ENCODE measurements at regions of chr7 and their contacts with region 1.

Region 1: DNA sequence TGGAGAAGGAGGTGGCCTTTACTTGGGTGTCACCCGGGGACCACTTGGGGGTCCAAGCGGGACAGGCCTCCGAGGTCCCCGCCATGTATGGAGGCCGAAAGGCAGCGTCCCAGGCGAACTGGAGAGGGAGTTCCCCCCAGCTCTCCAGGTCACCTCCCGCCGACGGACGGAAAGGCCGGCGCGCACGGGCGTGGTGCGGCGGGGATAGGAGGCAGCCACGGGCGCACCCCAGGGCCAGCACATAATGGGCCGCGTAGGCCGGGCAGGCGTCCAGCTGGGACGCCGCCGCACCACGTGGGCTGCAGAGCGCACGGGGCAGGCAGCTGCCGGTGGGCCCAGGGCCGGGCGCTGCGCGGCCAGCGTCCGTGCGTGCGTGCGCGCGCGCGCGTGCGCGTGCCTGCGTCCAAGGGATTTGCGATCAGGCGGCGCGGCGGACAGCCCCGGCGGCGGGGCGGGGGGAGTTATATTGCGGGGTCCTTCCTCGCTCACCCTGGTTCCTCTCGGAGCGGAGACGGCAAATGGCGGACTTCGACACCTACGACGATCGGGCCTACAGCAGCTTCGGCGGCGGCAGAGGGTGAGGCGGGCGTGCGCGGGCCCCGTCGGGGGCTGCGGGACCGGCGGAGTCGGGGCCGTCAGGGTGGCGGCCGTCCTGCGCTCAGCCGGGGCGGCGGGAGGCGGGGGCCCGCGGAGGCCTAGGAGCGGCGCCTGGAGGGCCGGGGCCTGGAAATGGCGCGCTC is at the start of gene EIF4H:
- DNase-seq: peak; percentile 96 to 99 (median 98)
- H3K4me3 ChIP-seq: peak within 1 kb of the TSS; percentile 67
- H3K27ac ChIP-seq: peak within 1 kb of the TSS; percentile 89 to 95
- H3K4me1 ChIP-seq: peaks cover 7% of the 10 kb centered on the region
- H3K27me3 ChIP-seq: no peaks in the 10 kb centered on the region
- CTCF ChIP-seq: peak in 2 of 3 donors; percentile 0 to 20
- EP300 ChIP-seq: no peak
- POLR2A ChIP-seq: peak; percentile 91
- total RNA-seq, gene EIF4H: 151 to 301 (median 273) TPM

Region 2: DNA sequence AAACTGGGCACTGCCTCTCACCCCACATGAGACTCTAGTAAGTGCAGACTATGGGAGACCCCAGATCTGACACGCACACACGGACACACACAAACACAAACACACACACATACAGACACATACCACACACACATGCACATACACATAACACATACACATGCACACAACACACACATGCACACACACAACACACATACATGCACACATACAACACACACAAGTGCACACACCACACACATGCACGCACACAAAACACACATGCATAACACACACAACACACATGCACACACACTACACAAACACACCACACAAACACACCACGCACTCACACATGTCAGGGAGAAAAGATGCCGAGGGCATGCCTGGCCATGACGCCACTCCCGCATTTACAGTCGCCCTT is 1551.5 kb before region 1 on chr7:
- intact Hi-C with region 1: no loop called
- DNase-seq: no peak
- H3K4me3 ChIP-seq: no peak overlapping the region
- H3K27ac ChIP-seq: no peak overlapping the region
- H3K4me1 ChIP-seq: peaks cover 2% of the 10 kb centered on the region
- H3K27me3 ChIP-seq: no peaks in the 10 kb centered on the region
- CTCF ChIP-seq: no peak
- EP300 ChIP-seq: no peak
- POLR2A ChIP-seq: no peak

Region 3: DNA sequence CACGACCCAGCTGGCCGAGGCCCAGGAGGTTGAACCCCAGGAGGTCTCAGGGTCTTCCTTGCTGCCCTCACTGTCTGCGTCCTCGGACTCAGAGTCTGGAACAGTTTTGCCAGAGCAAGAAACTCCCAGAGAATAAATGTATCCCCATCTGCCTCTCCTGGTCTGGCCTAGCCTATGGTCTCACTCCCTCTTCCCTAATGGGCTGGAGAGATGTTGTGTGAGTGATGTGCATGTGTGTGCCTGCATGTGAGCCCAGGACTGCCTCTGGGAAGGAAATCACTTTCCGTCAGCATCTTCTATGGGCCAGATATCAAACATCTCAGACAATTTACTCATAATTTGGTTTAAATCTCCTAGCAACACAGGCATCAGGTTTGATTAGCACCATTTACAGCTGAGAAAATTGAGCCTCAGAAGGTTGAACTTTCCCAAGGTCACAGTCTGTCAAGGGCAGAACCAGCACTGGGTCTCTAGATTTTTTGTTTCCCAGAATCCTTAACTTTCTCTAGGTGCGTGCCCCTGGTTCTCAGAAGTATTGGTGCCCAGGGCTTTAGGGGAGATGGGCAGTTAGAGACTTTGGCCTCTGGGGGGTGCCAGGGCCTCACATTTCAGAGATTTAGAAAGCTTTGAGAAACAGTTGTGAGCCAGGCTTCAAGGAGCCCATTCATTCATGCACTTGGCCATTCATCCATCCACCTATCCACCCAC is 308.1 kb before region 1 on chr7:
- intact Hi-C with region 1: loop called in 1 of 4 experiments (anchors 10 kb)
- DNase-seq: peak in 3 of 5 donors; percentile 44 to 67 (median 49)
- H3K4me3 ChIP-seq: no peak overlapping the region
- H3K27ac ChIP-seq: no peak overlapping the region
- H3K4me1 ChIP-seq: peaks cover 1% of the 10 kb centered on the region
- H3K27me3 ChIP-seq: no peaks in the 10 kb centered on the region
- CTCF ChIP-seq: peak in 2 of 3 donors; percentile 10 to 29
- EP300 ChIP-seq: no peak
- POLR2A ChIP-seq: no peak

Region 4: DNA sequence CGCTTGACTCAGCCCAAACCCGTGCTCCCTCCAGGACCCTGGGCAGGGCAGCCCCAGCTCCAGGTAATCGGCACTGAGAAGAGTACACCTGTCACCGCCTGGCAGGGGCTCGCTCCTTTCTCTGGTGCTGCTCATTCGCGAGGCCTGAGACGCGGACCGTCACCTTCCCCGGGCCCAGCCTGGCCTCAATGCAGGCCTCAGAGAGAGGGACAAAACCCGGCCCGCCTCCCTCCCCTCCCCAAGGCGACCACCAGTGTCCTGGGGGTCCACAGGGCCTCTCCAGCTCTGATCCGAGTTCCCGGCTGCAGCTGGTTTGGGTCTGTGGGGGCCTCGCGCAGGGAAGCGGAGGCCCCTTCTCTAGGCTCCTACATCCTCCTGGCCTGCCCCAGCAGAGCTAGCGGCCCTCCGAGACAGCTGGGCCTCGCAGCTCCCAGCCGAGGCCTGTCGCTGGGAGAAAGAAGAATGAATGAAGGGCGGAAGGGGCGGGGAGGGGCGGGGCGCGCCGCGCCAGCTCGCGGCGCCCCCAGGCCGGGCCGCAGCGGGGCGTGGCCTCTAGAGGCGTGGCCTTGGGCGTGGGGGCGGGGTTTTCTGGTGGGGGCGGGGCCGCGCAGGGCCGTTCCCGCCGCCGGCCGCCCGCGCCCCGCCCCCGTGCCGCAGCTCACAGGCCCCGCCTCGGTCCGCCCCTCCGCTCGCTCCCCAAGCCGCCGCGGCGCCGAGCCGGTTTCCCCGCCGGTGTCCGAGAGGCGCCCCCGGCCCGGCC is 90.7 kb before region 1 on chr7 and contains the start of gene LIMK1:
- intact Hi-C with region 1: loop called in 1 of 4 experiments (anchors 10 kb)
- DNase-seq: peak; percentile 76 to 89 (median 86)
- H3K4me3 ChIP-seq: peak within 1 kb of the TSS; percentile 84
- H3K27ac ChIP-seq: peak within 1 kb of the TSS; percentile 12 to 51
- H3K4me1 ChIP-seq: peaks cover 6% of the 10 kb centered on the region
- H3K27me3 ChIP-seq: no peaks in the 10 kb centered on the region
- CTCF ChIP-seq: no peak
- EP300 ChIP-seq: no peak
- POLR2A ChIP-seq: no peak
- total RNA-seq, gene LIMK1: 8.2 to 38.7 (median 29.1) TPM

Region 5: DNA sequence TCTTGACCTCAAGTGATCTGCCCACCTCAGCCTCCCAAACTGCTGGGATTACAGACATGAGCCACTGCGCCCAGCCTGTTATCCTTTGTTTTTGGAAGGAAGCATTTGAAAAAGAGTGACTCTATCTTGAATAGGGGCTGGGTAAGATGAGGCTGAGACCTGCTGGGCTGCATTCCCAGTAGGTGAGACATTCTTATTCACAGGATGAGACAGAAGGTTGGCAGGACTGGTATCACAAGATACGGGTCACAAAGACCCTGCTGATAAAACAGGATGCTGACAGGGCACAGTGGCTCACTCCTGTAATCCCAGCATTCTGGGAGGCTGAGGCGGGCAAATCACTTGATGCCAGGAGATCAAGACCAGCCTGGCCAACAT is 40.4 kb before region 1 on chr7:
- intact Hi-C with region 1: no loop called
- DNase-seq: no peak
- H3K4me3 ChIP-seq: no peak overlapping the region
- H3K27ac ChIP-seq: no peak overlapping the region
- H3K4me1 ChIP-seq: no peaks in the 10 kb centered on the region
- H3K27me3 ChIP-seq: no peaks in the 10 kb centered on the region
- CTCF ChIP-seq: no peak
- EP300 ChIP-seq: no peak
- POLR2A ChIP-seq: no peak

Measured in ovary (tissue), 10 donors.